ENCODE measurements at regions of chr7 and their contacts with region 1.

Region 1: DNA sequence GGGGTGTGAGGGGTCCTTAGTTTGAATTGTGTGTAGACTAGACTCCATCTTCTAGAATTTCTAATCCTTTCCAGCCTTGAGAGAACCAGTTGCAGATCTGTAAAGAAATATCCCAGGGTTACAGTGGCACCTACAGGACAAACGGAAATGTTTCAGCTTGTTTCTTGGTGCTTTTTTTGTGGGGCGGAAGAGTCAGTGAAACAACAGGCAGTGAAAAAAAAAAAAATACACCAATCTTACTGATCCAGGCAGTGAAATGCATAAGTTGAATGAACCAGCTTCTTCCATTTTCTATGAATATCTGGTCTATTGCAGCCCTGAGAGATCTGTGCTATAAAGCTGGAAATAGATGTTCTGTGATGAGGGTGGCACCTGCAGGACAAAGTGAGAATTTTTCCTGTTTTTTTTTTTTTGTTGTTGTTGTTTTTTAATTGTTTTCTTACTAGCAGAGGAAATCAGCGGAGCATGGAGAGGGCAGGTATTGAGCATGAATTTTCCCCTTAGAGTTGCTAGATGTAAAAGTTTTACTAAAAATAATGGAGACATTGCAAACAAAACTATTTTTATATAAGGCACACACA is 81.9 kb upstream of the DYNC1I1 start:
- DNase-seq: peak; percentile 91

Region 2: GRCh38 chr7:94289071-94289470 is 1401.4 kb before region 1 on chr7:
- in situ Hi-C with region 1: loop called (anchors 25 kb)
- DNase-seq: peak; percentile 95

Region 3: DNA sequence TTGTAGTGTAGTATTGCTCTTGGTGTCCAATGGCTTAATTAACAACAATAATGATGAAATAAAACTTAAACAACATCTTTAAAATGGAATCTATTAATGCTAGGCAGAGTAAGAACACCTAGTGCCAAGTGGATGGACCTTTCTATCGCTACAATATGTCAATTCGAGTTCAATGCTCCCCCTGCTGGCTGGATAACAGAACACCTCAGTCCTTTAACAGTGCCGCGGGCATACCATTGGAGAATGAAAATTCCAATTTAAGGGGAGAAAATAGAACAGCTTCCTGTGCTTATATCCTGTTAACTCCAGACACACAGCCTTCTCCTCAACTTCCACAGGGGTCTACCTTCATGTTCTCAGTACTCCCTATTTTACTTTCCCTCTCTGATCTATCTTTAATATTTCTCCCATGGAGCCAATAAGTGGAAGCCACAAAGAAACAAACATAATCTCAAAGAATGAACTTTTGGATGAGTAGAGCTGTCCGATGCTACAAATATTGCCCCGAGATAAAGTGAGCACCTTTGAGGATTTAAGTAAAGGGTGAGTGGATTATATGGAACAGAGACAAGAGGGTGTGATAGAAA is 1254.3 kb before region 1 on chr7:
- in situ Hi-C with region 1: loop called (anchors 25 kb)
- DNase-seq: peak; percentile 91

Region 4: GRCh38 chr7:95511716-95512260 is 178.7 kb before region 1 on chr7:
- in situ Hi-C with region 1: loop called (anchors 25 kb)
- DNase-seq: peak; percentile 98

Measured in SK-MEL-5 (cell line).